PC-9 (cell line): ENCODE measurements at regions of chr19 and their contacts with region 1.

Region 1: DNA sequence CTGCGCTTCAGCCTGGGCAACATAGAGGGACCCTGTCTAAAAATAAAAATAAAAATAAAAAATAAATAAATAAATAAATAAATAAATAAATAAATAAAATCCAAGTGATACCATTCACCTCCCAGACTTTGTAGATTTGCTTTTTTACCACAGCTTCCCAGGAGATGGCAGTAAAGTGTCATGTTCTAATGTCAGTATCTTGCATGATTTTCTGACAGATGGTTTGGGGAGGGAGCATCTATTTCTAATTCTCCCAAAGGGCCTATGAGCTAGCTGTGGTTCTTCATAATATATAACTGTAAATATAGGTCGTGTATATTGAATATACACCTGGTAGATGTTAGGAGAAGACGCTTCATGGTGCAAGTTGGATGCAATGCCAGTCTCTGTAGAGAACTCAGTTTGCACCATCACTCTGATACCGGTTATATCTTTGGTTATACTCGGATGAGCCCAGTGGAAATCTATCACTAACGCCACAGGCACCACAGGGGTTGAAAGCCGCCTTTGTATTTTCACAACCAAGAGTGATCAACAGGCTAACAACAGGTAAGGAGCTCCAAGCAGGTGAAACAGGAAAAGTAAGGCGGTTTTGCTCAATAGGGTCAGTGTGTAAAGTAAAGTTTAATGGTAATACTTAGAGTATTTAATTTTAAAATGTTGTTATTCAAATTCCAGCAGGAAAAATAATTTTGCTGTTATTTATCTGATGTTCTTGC is 13.9 kb downstream of the APLP1 start:
- DNase-seq: peak in 1 of 2 experiments; percentile 33
- H3K4me3 ChIP-seq: no peak overlapping the region
- H3K27ac ChIP-seq: no peak overlapping the region
- H3K4me1 ChIP-seq: no peaks in the 10 kb centered on the region
- H3K27me3 ChIP-seq: peaks cover 23% of the 10 kb centered on the region
- CTCF ChIP-seq: peak; percentile 74

Region 2: GRCh38 chr19:36214386-36215275 is 332.4 kb after region 1 on chr19 and contains the starts of genes ZNF146 and ZNF565:
- CTCF ChIA-PET with region 1: no interaction called
- POLR2A ChIA-PET with region 1: interaction called, 17 read pairs
- intact Hi-C with region 1: no loop called
- DNase-seq: peak; percentile 95
- H3K4me3 ChIP-seq: peak within 1 kb of the TSS; percentile 70
- H3K27ac ChIP-seq: peak within 1 kb of the TSS; percentile 57
- H3K4me1 ChIP-seq: peaks cover 5% of the 10 kb centered on the region
- H3K27me3 ChIP-seq: no peaks in the 10 kb centered on the region
- CTCF ChIP-seq: no peak
- total RNA-seq, gene ZNF146: 53.1 and 68.0 TPM in 2 replicates
- total RNA-seq, gene ZNF565: 3.3 and 4.3 TPM in 2 replicates